ENCODE measurements at regions of chr3 and their contacts with region 1.

Region 1: DNA sequence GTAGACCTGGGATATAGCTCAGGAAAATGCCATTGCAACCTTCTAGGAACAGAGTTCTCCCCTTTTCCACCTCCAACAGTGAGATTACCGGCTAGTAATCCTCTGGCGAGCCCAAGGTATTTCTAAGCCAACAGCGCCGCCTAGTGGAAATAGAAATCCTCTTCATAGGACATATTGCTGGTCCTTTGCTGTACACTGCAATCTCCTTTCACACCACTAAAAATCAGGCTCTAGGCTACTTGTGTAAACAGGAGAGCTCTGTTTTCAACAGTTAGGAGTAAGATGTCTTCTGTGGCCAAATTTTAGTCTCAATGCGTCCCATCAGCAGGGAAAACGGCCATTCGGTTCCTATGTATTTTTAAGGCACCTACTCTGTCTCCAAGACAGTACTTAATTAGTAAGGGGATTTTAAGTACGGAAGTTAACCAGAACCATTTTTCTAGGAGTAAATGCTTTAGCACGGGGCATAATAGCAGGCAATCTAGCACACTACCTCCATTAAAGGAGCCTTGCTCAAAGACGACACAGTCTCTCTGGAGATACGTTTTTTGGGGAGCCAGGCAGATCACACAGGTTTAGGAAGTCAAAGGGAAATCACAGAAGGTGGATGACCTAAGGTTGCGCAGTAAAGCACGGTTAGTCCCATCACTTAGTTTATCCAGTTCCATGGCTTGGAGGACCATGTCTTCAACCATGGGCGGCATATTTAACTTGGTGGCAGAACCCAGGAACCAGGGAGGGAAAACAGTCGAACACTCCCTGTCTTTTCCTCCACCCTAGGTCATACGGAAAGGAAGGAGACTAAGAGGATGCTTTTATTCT is 43.8 kb downstream of the NCEH1 start:
- DNase-seq: peak in 4 of 5 donors; percentile 65 to 79 (median 73)
- ATAC-seq: peak; percentile 88 to 97 (median 96)
- H3K4me3 ChIP-seq: no peak overlapping the region
- H3K27ac ChIP-seq: no peak overlapping the region
- H3K4me1 ChIP-seq: peaks cover 0 to 28% (median 20%) of the 10 kb centered on the region in 12 donors
- H3K27me3 ChIP-seq: no peaks in the 10 kb centered on the region
- CTCF ChIP-seq: peak; percentile 73 to 89 (median 84)
- POLR2A ChIP-seq: no peak

Region 2: DNA sequence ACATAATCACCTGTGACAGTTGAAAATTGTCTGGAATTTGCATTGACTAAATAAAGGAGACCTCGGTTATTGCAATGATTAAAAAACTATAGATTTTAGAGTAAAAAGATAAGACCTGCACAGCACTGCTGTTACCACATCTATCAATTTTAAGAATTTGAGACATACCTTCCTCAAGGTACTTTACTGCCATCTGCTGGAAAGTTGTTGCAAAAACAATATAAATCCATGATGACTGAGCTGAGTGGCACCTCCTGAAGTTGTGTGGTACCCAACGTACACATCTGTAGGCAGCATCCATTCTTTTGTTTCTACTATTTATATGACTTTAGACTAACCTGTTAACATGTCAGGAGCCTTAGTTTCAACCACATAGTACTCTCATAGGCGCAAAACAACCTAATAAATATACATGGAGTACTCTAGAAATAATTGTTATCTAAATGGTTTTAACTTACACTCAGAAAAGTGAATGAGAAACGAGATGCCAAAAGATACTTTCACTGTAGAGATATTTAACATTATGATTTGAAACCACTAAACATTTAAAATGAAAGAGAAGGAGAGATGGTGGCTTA is 325.5 kb before region 1 on chr3:
- intact Hi-C with region 1: loop called in 1 of 10 experiments (anchors 5 kb)
- DNase-seq: no peak
- ATAC-seq: peak; percentile 35 to 70 (median 58)
- H3K4me3 ChIP-seq: no peak overlapping the region
- H3K27ac ChIP-seq: no peak overlapping the region
- H3K4me1 ChIP-seq: peaks cover 0 to 7% (median 0%) of the 10 kb centered on the region in 12 donors
- H3K27me3 ChIP-seq: no peaks in the 10 kb centered on the region
- CTCF ChIP-seq: peak; percentile 59 to 84 (median 72)
- POLR2A ChIP-seq: no peak

Region 3: GRCh38 chr3:172355839-172356238 is 311.2 kb before region 1 on chr3:
- intact Hi-C with region 1: loop called in 3 of 10 experiments (anchors 5 to 10 kb)
- DNase-seq: no peak
- ATAC-seq: peak in 3 of 4 donors; percentile 62 to 63 (median 63)
- H3K4me3 ChIP-seq: no peak overlapping the region
- H3K27ac ChIP-seq: peak overlapping the region in 1 of 12 donors; percentile 2
- H3K4me1 ChIP-seq: peaks cover 0 to 46% (median 20%) of the 10 kb centered on the region in 12 donors
- H3K27me3 ChIP-seq: no peaks in the 10 kb centered on the region
- CTCF ChIP-seq: no peak
- POLR2A ChIP-seq: no peak

Region 4: DNA sequence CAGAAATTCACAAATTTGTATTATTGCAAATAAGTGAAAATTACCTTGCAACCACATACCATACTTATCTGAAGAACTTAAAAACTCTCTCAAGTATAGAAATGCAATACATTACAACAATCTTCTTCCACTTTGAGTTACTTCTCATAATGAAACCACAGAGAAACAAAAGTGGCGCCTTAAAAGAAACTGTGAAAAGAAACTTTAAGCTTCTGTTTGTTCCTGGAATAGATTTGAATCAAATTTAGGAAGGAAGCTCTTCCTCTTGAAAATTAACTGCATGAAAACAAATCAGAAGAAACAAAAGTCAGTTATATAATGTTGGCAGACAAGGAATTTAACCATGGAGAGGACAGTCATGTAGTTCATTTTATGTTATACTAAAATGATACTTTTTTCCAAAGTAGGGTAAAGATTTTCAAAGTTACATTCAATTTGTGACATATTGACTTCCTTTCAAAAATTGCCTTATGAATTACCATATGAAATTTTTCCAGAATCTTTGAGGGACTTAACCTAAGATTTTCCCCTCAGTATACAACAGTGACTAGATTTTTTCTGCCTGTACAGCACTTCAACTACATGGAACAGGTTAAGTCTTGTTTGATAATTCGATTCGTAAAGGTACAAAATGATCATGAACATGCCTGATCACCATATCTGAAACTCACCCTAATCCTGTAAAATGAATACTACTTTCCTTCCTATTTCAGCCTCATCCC is 86.2 kb before region 1 on chr3:
- intact Hi-C with region 1: no loop called
- DNase-seq: no peak
- ATAC-seq: peak in 2 of 4 donors; percentile 37 to 45
- H3K4me3 ChIP-seq: peak overlapping the region in 1 of 12 donors; percentile 18
- H3K27ac ChIP-seq: peak overlapping the region; percentile 11 to 92 (median 77)
- H3K4me1 ChIP-seq: peaks cover 0 to 61% (median 22%) of the 10 kb centered on the region in 12 donors
- H3K27me3 ChIP-seq: no peaks in the 10 kb centered on the region
- CTCF ChIP-seq: no peak
- POLR2A ChIP-seq: no peak

Region 5: GRCh38 chr3:173045770-173046382 is 378.8 kb after region 1 on chr3:
- intact Hi-C with region 1: no loop called
- DNase-seq: no peak
- ATAC-seq: no peak
- H3K4me3 ChIP-seq: no peak overlapping the region
- H3K27ac ChIP-seq: no peak overlapping the region
- H3K4me1 ChIP-seq: peaks cover 0 to 10% (median 0%) of the 10 kb centered on the region in 12 donors
- H3K27me3 ChIP-seq: no peaks in the 10 kb centered on the region
- CTCF ChIP-seq: peak; percentile 16 to 56 (median 40)
- POLR2A ChIP-seq: no peak